ENCODE measurements at regions of chr2 and their contacts with region 1.

Region 1: DNA sequence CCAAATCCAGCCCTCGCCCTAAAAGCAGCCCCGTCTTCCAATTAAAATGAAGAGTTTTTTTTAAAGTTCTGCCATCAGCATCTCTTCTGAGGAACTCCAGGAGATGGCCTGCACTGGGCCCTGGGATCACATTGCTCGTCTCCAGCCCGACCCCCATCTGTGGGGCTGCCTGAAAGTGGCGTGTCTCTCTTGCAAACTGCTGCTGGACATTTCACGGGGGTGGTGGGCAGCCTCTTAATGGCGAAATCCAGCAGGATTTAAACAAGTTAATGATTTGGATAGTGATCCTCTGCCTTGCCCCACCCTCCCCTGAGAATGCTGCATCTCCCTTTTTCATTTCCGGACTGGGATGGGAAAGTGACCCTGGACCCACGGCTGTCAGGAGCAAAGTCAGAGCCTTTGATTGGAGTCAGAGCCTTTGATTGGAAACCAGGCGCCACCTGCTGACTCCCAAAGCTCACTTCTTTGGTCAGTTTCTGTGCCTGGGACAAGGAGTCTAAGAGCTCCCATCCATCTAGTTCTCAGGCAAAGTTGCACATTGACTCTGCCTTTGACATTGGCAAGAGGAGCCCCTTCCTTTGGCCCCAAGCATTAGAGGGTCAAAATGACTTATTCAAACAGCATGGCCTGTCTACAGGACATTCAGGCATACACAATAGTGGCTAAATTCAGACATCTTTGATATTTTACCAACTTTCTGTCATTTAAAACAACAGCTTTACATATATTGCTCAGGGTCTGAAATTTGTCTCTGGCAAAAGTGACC is 155.2 kb downstream of the SH3BP4 start:
- DNase-seq: peak; percentile 70
- H3K4me3 ChIP-seq: no peak overlapping the region
- H3K27ac ChIP-seq: no peak overlapping the region
- H3K4me1 ChIP-seq: no peaks in the 10 kb centered on the region
- H3K27me3 ChIP-seq: no peaks in the 10 kb centered on the region
- CTCF ChIP-seq: peak; percentile 74 to 84
- POLR2A ChIP-seq: no peak

Region 2: GRCh38 chr2:234555720-234556119 is 551.3 kb before region 1 on chr2:
- CTCF ChIA-PET with region 1: interaction called, 98 read pairs
- POLR2A ChIA-PET with region 1: no interaction called
- dilution Hi-C with region 1: loop called (anchors 25 kb)
- intact Hi-C with region 1: loop called (anchors 1 kb)
- DNase-seq: no peak
- H3K4me3 ChIP-seq: no peak overlapping the region
- H3K27ac ChIP-seq: no peak overlapping the region
- H3K4me1 ChIP-seq: no peaks in the 10 kb centered on the region
- H3K27me3 ChIP-seq: no peaks in the 10 kb centered on the region
- CTCF ChIP-seq: no peak
- POLR2A ChIP-seq: no peak

Region 3: DNA sequence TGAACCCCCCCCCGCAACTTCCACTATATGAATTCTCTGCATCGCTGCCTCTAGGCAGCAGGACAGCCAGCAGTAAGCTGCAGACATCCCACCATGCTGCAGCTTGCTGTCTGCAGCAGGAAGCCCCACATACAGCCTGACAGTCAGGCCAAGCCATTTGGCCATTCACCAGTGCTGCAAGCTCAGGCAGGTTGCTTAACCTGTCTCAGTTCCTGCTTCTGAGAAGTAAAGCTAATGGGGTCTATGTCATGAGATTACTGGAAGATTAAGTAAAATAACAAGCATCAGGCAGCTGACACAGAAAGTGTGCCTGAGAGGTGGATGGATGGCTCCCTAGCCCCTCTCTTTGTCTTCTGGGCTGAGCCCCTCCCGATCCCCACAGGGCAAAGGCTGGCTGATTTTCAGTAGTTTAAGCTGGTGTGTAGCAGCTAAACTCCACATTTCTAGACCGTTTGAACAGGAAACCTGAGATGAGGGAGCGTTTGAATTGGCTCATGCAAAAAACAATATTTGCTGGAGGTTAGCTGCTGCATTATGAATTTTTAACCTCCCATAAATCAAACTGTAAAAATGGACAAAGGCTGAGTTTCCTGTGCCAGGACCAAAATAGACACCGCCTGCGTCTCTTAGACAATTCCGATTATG is 416.4 kb before region 1 on chr2:
- CTCF ChIA-PET with region 1: interaction called, 7 read pairs
- POLR2A ChIA-PET with region 1: no interaction called
- dilution Hi-C with region 1: no loop called
- intact Hi-C with region 1: loop called (anchors 5 kb)
- DNase-seq: peak; percentile 97
- H3K4me3 ChIP-seq: no peak overlapping the region
- H3K27ac ChIP-seq: peak overlapping the region; percentile 75
- H3K4me1 ChIP-seq: peaks cover 40% of the 10 kb centered on the region
- H3K27me3 ChIP-seq: no peaks in the 10 kb centered on the region
- CTCF ChIP-seq: no peak
- POLR2A ChIP-seq: no peak

Region 4: DNA sequence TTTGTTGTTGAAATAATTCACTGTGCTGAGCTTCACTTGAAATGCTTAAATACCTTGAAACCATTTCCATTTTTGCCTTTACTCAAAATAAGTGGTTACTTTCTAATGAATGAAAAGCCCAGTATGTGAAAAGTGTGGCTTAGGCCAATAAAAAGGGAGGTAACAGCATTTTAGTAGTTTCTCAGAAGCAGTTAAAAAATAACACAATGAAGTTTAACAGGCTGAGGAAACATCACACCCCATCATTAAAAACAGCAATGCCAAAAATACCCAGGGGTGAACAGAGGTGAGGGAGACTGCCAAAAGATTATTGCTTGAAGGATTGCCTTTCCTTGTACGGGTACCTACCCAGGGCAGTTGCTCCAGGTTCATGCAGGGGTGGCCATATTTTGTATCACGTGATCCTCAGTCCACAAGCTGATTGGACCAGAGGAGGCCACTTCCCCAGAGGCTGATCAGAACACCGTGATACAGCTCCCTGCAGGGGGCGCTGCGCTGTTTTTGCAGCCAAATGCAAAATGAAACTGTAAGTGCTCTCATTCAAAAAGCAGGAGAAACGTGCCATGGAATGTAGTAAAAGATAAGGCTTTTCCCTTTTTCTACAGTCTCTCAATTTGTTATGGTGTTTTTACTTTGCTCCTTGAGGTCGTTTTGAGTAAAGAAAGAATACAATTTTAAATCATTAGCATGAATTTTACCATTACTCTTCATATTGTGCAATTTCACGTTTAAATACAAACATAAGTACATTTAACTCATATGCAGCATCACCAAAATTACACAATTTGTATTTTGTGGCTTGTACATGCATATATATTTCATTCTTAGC is 225.4 kb before region 1 on chr2:
- CTCF ChIA-PET with region 1: interaction called, 34 read pairs
- POLR2A ChIA-PET with region 1: no interaction called
- dilution Hi-C with region 1: no loop called
- intact Hi-C with region 1: loop called (anchors 1 kb)
- DNase-seq: peak; percentile 92
- H3K4me3 ChIP-seq: peak overlapping the region in 1 of 3 experiments; percentile 12
- H3K27ac ChIP-seq: peak overlapping the region; percentile 79
- H3K4me1 ChIP-seq: peaks cover 23% of the 10 kb centered on the region
- H3K27me3 ChIP-seq: no peaks in the 10 kb centered on the region
- CTCF ChIP-seq: peak; percentile 87 to 91
- POLR2A ChIP-seq: peak; percentile 23

Region 5: GRCh38 chr2:234930397-234930796 is 176.7 kb before region 1 on chr2:
- CTCF ChIA-PET with region 1: no interaction called
- POLR2A ChIA-PET with region 1: no interaction called
- dilution Hi-C with region 1: no loop called
- intact Hi-C with region 1: no loop called
- DNase-seq: no peak
- H3K4me3 ChIP-seq: no peak overlapping the region
- H3K27ac ChIP-seq: no peak overlapping the region
- H3K4me1 ChIP-seq: no peaks in the 10 kb centered on the region
- H3K27me3 ChIP-seq: peaks cover 2 to 7% of the 10 kb centered on the region in 2 experiments
- CTCF ChIP-seq: no peak
- POLR2A ChIP-seq: no peak

Region 6: GRCh38 chr2:234996069-234996940 is 110.8 kb before region 1 on chr2:
- CTCF ChIA-PET with region 1: interaction called, 7 read pairs
- POLR2A ChIA-PET with region 1: no interaction called
- dilution Hi-C with region 1: no loop called
- intact Hi-C with region 1: loop called (anchors 1 kb)
- DNase-seq: peak; percentile 64
- H3K4me3 ChIP-seq: no peak overlapping the region
- H3K27ac ChIP-seq: peak overlapping the region; percentile 88
- H3K4me1 ChIP-seq: peaks cover 56% of the 10 kb centered on the region
- H3K27me3 ChIP-seq: no peaks in the 10 kb centered on the region
- CTCF ChIP-seq: peak; percentile 41 to 53
- POLR2A ChIP-seq: no peak

Region 7: GRCh38 chr2:235063471-235063961 is 43.5 kb before region 1 on chr2:
- CTCF ChIA-PET with region 1: interaction called, 10 read pairs
- POLR2A ChIA-PET with region 1: no interaction called
- dilution Hi-C with region 1: no loop called
- intact Hi-C with region 1: no loop called
- DNase-seq: no peak
- H3K4me3 ChIP-seq: no peak overlapping the region
- H3K27ac ChIP-seq: no peak overlapping the region
- H3K4me1 ChIP-seq: no peaks in the 10 kb centered on the region
- H3K27me3 ChIP-seq: no peaks in the 10 kb centered on the region
- CTCF ChIP-seq: no peak
- POLR2A ChIP-seq: no peak

Measured in endothelial cell of umbilical vein (primary cell).